ENCODE measurements at regions of chr9 and their contacts with region 1.

Region 1: GRCh38 chr9:37422289-37423104 is at the start of gene GRHPR:
- DNase-seq: peak in 1 of 2 experiments; percentile 87
- H3K4me3 ChIP-seq: peak within 1 kb of the TSS; percentile 76 to 97 (median 84)
- H3K27ac ChIP-seq: peak within 1 kb of the TSS; percentile 68
- H3K4me1 ChIP-seq: peaks cover 2 to 15% (median 8%) of the 10 kb centered on the region in 4 experiments
- H3K27me3 ChIP-seq: no peaks in the 10 kb centered on the region
- CTCF ChIP-seq: no peak
- EP300 ChIP-seq: no peak
- POLR2A ChIP-seq: peak in 1 of 2 experiments; percentile 64; a peak in 2 of 3 replicates
- RAD21 ChIP-seq: no peak; a peak in 1 of 4 replicates
- total RNA-seq, gene GRHPR: 97.0 and 98.1 TPM in 2 replicates

Region 2: GRCh38 chr9:36913393-36914211 is 508.9 kb before region 1 on chr9:
- CTCF ChIA-PET with region 1: no interaction called
- POLR2A ChIA-PET with region 1: no interaction called
- DNase-seq: no peak
- H3K4me3 ChIP-seq: no peak overlapping the region
- H3K27ac ChIP-seq: no peak overlapping the region
- H3K4me1 ChIP-seq: peaks cover 3 to 7% (median 4%) of the 10 kb centered on the region in 4 experiments
- H3K27me3 ChIP-seq: no peaks in the 10 kb centered on the region
- CTCF ChIP-seq: peak; percentile 38 to 54 (median 41)
- EP300 ChIP-seq: no peak
- POLR2A ChIP-seq: no peak
- RAD21 ChIP-seq: peak in 1 of 2 experiments; percentile 23; a peak in 1 of 4 replicates

Region 3: GRCh38 chr9:37311938-37312708 is 110.4 kb before region 1 on chr9:
- CTCF ChIA-PET with region 1: no interaction called
- POLR2A ChIA-PET with region 1: no interaction called
- DNase-seq: no peak
- H3K4me3 ChIP-seq: no peak overlapping the region
- H3K27ac ChIP-seq: no peak overlapping the region
- H3K4me1 ChIP-seq: no peaks in the 10 kb centered on the region
- H3K27me3 ChIP-seq: no peaks in the 10 kb centered on the region
- CTCF ChIP-seq: no peak
- EP300 ChIP-seq: no peak
- POLR2A ChIP-seq: no peak
- RAD21 ChIP-seq: no peak

Region 4: DNA sequence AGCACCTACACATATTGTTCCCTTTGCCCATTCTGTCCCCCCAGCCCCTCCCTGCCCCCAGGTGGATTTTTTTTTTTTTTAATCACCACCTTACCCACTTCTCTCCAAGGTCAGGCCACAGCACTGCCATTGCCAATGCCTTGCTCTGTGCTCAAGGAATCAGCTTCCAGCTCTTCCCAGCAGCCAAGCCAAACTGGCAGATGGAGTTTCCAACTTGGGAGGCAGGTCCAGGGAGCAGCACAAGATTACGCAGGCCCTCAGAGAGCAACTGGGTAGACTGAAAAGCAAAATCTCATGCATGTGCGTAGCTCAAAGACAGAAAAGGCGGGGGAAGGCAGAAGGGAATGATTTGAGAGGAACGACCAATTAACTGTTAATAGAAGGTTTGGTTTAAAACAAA is 15.1 kb after region 1 on chr9:
- CTCF ChIA-PET with region 1: interaction called, 3 read pairs
- POLR2A ChIA-PET with region 1: interaction called, 15 read pairs
- DNase-seq: no peak
- H3K4me3 ChIP-seq: no peak overlapping the region
- H3K27ac ChIP-seq: no peak overlapping the region
- H3K4me1 ChIP-seq: peaks cover 3 to 15% (median 9%) of the 10 kb centered on the region in 4 experiments
- H3K27me3 ChIP-seq: no peaks in the 10 kb centered on the region
- CTCF ChIP-seq: no peak
- EP300 ChIP-seq: no peak
- POLR2A ChIP-seq: no peak
- RAD21 ChIP-seq: no peak